Panc1 (cell line): ENCODE measurements at regions of chr1 and their contacts with region 1.

Region 1: GRCh38 chr1:236748471-236748870 is 46.6 kb upstream of the MTR start:
- DNase-seq: no peak
- ATAC-seq: peak; percentile 67; the same call in 1 of the 2 replicates
- H3K4me3 ChIP-seq: no peak overlapping the region
- H3K27ac ChIP-seq: no peak overlapping the region
- H3K4me1 ChIP-seq: no peaks in the 10 kb centered on the region
- H3K27me3 ChIP-seq: no peaks in the 10 kb centered on the region; the same call in 1 of the 2 replicates
- CTCF ChIP-seq: peak; percentile 42; the same call in 1 of the 2 replicates

Region 2: DNA sequence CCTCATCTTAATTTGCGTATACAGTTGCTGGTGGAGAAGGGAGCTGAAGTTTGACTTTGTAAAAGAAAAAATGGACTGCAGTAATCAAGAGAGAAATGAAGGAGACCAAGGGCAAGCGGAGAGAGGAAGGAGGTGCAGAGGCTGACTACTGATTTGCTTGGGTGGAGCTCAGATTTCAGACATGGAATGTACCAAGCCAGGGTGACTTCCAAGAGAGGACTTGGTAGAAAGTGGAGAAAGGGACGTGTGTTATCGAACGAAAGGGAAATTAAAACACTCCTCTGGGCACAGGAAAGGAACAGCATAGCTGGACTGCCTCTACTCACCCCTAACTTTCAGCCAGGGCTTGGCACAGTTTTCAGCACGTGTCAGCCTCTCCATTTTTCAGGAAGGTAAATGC is 129.1 kb before region 1 on chr1:
- CTCF ChIA-PET with region 1: no interaction called
- POLR2A ChIA-PET with region 1: no interaction called
- in situ Hi-C with region 1: no loop called
- intact Hi-C with region 1: loop called (anchors 10 kb)
- DNase-seq: no peak
- ATAC-seq: 0 out of 2 replicates have a peak, but pooled peaks have one; percentile 45
- H3K4me3 ChIP-seq: no peak overlapping the region
- H3K27ac ChIP-seq: peak overlapping the region; percentile 51; the same call in 1 of the 2 replicates
- H3K4me1 ChIP-seq: no peaks in the 10 kb centered on the region; the same call in 1 of the 2 replicates
- H3K27me3 ChIP-seq: no peaks in the 10 kb centered on the region
- CTCF ChIP-seq: no peak

Region 3: DNA sequence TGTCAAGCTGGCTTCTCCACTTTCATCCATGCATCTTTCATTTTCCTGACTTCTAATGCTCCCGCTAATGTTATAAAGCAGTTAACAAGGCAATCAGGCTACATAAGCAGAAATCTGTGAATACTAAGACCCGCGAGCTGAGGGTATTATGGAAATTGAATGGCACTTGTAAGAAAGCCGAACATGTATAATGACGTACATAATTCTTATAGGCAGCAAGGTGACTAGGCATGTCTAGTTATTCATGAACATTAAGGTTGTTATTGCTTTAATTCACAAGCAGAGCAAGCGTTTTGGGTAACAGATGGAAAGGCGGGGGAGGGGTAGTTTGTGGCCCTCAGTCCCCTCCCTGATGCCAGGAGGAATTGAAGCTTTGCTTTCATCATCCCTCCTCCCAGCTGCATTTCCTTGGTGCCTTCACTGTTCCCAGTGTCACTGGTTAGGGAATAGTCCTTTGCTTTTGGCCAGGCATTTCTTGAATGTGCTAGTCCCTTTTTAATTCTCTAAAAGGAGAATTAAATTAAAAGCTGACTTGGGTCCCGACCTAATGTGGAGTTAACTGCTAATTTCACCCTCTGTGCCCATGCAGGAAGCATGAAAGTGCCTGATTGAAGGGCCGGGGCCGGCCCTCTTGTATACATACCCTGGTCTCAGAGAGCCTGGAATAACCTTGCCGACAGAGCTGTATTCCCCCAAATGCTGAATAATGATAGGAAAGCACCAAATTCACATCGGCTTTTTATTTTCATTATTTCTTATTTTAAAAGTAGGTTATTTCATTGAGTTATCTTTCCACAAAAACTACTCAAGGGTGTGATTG is 336.0 kb after region 1 on chr1:
- CTCF ChIA-PET with region 1: interaction called, 5 read pairs
- POLR2A ChIA-PET with region 1: interaction called, 11 read pairs
- in situ Hi-C with region 1: no loop called
- intact Hi-C with region 1: no loop called
- DNase-seq: no peak
- ATAC-seq: no peak
- H3K4me3 ChIP-seq: no peak overlapping the region
- H3K27ac ChIP-seq: no peak overlapping the region
- H3K4me1 ChIP-seq: no peaks in the 10 kb centered on the region
- H3K27me3 ChIP-seq: no peaks in the 10 kb centered on the region
- CTCF ChIP-seq: no peak

Region 4: GRCh38 chr1:238214449-238214848 is 1466.0 kb after region 1 on chr1:
- CTCF ChIA-PET with region 1: no interaction called
- POLR2A ChIA-PET with region 1: no interaction called
- in situ Hi-C with region 1: no loop called
- intact Hi-C with region 1: no loop called
- DNase-seq: no peak
- ATAC-seq: no peak
- H3K4me3 ChIP-seq: no peak overlapping the region
- H3K27ac ChIP-seq: no peak overlapping the region
- H3K4me1 ChIP-seq: no peaks in the 10 kb centered on the region
- H3K27me3 ChIP-seq: no peaks in the 10 kb centered on the region
- CTCF ChIP-seq: no peak